Activated CD4-positive, alpha-beta T cell treated with anti-CD3 and anti-CD28 coated beads, Interleukin-2, amount 10 ng/mL, durations not matched to agents 24 days and 14 days (primary cell): ENCODE measurements at regions of chr6 and their contacts with region 1.

Region 1: DNA sequence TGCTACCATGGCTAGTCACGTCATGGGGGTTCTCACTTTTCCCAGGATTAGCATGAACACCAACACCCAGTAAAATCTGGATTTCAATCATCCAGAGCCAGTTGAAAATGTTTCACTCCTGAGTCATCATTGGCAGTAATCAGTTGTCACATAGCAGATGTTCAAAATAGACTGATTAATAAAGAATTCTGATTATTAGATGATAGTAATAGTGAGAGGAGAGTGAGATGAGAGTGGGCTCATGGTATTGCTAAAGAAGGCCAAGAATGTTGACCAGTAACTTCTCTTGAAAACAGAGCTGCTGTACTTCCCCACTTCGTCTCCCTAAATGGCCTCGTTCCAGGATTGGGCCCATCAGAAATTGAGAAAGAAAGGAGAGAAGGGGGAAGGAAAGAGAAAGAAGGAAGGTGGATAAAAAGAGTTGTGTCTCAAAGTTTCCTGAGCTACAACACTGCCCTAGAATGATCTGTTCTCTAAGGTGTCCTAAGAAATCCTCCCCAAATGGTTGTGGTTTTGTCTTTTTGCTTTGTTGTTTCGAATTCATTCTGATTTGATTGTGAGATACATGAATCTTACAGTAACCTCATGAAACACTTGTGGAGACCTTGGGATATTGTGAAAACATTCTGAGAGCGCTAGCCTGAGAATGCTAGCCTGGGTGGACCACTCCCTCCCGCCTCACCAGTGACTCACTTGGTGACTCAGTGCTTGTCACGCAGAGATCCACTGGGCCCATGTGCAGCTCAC is 502.2 kb upstream of the JARID2 start:
- DNase-seq: peak; percentile 90
- H3K4me3 Mint-ChIP-seq: peak overlapping the region; percentile 30
- H3K27ac Mint-ChIP-seq: peak overlapping the region; percentile 98
- H3K4me1 Mint-ChIP-seq: peaks cover 74% of the 10 kb centered on the region
- H3K27me3 Mint-ChIP-seq: no peaks in the 10 kb centered on the region

Region 2: DNA sequence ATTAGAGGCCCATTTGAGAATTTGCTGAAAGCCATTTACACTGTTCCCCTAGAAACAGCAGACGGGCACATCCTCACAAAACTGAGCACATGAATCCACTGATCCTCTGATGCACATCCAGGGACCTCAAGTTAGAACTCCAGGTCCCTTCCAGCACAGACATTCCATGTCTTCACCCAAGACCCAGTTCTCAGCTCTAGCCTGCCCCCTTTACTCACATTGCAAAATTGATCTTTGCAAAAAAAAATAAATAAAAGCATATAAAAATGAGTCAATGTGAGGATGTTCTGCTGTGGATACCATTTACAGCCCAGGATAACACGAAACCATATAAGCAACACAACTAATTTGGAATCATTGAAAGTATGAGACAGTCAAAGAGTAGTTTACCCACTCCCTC is 44.0 kb after region 1 on chr6:
- intact Hi-C with region 1: loop called (anchors 1 kb)
- DNase-seq: no peak
- H3K4me3 Mint-ChIP-seq: no peak overlapping the region
- H3K27ac Mint-ChIP-seq: no peak overlapping the region
- H3K4me1 Mint-ChIP-seq: peaks cover 42% of the 10 kb centered on the region
- H3K27me3 Mint-ChIP-seq: no peaks in the 10 kb centered on the region

Region 3: GRCh38 chr6:14816116-14816859 is 72.7 kb after region 1 on chr6:
- intact Hi-C with region 1: loop called (anchors 2 kb)
- DNase-seq: no peak
- H3K4me3 Mint-ChIP-seq: no peak overlapping the region
- H3K27ac Mint-ChIP-seq: no peak overlapping the region
- H3K4me1 Mint-ChIP-seq: peaks cover 26% of the 10 kb centered on the region
- H3K27me3 Mint-ChIP-seq: no peaks in the 10 kb centered on the region

Region 4: GRCh38 chr6:14857501-14857900 is 113.9 kb after region 1 on chr6:
- intact Hi-C with region 1: loop called (anchors 1 kb)
- DNase-seq: peak; percentile 82
- H3K4me3 Mint-ChIP-seq: peak overlapping the region; percentile 71
- H3K27ac Mint-ChIP-seq: peak overlapping the region; percentile 98
- H3K4me1 Mint-ChIP-seq: peaks cover 35% of the 10 kb centered on the region
- H3K27me3 Mint-ChIP-seq: no peaks in the 10 kb centered on the region